Aorta (tissue), 5 donors: ENCODE measurements at regions of chr6 and their contacts with region 1.

Region 1: DNA sequence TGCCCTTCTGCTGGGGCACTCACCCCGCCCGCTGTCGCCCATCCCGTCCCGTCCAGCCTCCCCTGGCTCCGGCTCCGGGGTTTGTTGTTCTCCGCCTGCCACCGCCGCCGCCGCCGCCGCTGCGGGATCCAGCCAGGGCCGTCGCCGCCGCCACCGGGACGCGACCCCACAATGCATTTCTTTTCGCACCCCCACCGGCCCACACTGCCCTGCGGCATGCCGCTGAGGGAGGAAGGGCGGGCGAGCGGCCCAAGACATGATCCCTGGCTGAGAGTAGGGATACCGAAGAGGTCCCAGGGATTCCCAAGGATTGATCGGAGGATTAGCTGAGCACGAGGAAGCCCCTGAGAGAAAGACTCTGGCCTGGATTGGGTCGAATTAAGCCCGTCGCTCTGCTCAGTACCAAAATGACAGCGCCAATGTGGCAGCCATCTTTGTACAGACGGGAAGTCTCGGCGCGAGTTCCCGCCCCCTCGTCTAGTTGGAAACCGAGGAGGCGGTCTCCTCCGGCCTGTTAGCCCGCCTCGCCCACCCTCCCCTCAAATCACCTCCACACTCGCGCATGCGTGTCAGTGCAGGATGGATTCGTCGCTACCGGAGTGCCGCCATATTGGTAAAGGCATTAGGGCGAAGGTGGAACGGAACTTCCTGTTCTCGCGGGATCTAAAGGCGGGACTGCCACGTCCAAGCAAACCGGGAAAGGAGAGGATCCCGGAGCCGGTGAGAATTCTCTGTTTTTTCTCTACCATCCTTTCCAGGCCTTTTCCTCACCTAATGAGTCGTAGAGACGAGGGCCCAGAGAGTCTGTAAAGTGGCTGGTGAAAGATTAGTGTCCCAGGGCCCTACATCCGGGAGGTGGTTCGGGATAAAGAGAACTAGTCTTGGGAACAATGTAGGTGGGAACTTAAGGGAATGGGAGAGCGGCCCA is at the starts of genes RXRB and SLC39A7:
- DNase-seq: peak; percentile 100
- ATAC-seq: peak; percentile 94
- H3K4me3 ChIP-seq: peak within 1 kb of the TSS; percentile 46 to 72
- H3K27ac ChIP-seq: peak within 1 kb of the TSS; percentile 61 to 64
- H3K4me1 ChIP-seq: no peaks in the 10 kb centered on the region
- H3K27me3 ChIP-seq: no peaks in the 10 kb centered on the region
- total RNA-seq, gene RXRB: 51.6 to 55.4 TPM
- total RNA-seq, gene SLC39A7: 86.9 to 90.3 TPM

Region 2: DNA sequence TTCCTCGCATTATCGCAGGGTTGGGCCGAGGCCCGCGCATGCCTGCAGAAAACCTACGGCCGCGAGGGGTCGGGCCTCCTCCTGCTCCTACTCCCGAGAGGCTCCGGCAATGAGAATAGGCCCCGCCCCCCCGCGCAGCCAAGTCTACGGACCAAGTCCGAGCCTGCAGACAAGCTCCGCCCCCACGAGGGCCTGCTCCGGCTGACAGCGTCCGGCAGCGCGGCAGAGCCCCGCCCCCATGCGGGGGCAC is 1004.9 kb before region 1 on chr6:
- intact Hi-C with region 1: loop called in 1 of 2 experiments (anchors 10 kb)
- DNase-seq: peak; percentile 100
- ATAC-seq: peak; percentile 96
- H3K4me3 ChIP-seq: no peak overlapping the region
- H3K27ac ChIP-seq: no peak overlapping the region
- H3K4me1 ChIP-seq: no peaks in the 10 kb centered on the region
- H3K27me3 ChIP-seq: no peaks in the 10 kb centered on the region

Region 3: GRCh38 chr6:33161354-33162331 is 38.8 kb before region 1 on chr6:
- intact Hi-C with region 1: loop called (anchors 2 to 5 kb)
- DNase-seq: peak; percentile 90 to 96
- ATAC-seq: peak; percentile 94
- H3K4me3 ChIP-seq: no peak overlapping the region
- H3K27ac ChIP-seq: peak overlapping the region in 1 of 2 donors; percentile 19
- H3K4me1 ChIP-seq: no peaks in the 10 kb centered on the region
- H3K27me3 ChIP-seq: no peaks in the 10 kb centered on the region

Region 4: GRCh38 chr6:33417903-33418689 is 217.6 kb after region 1 on chr6 and contains the start of gene CUTA:
- intact Hi-C with region 1: loop called in 1 of 2 experiments (anchors 10 kb)
- DNase-seq: peak; percentile 100
- ATAC-seq: peak; percentile 96
- H3K4me3 ChIP-seq: peak within 1 kb of the TSS; percentile 40 to 68
- H3K27ac ChIP-seq: peak within 1 kb of the TSS; percentile 25 to 93
- H3K4me1 ChIP-seq: no peaks in the 10 kb centered on the region
- H3K27me3 ChIP-seq: no peaks in the 10 kb centered on the region
- total RNA-seq, gene CUTA: 89.9 to 111 TPM